ENCODE measurements at regions of chr5 and their contacts with region 1.

Region 1: DNA sequence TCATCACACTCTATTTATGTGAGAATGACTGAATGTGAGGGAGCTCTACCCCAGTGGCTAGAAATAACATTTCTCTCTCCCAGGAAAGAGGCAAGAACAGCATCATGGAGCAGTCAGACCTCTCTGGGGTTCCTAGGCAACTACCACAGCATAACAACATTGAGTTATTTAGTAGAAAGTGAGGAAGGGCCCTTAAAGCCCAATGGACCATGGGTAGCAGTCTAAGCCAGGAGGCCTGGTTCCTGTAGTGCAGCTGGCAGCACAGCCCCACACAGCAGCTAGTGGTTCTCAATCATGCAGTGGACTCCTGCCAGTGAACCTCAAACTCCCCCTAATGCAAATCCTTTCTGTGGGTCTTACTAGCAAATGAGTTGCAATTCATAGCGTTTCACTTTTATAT is 55.3 kb downstream of the SPEF2 start:
- DNase-seq: peak in 32 of 35 experiments; percentile 1 to 51 (median 18)
- ATAC-seq: peak; percentile 26 to 84 (median 42)
- H3K4me3 ChIP-seq: peak overlapping the region in 1 of 2 donors; percentile 38
- H3K4me3 Mint-ChIP-seq: peak overlapping the region in 1 of 3 donors; percentile 69
- H3K27ac ChIP-seq: peak overlapping the region; percentile 67
- H3K27ac Mint-ChIP-seq: peak overlapping the region; percentile 90 to 92
- H3K4me1 ChIP-seq: peaks cover 8 to 59% of the 10 kb centered on the region in 2 experiments
- H3K4me1 Mint-ChIP-seq: peaks cover 57 to 76% (median 60%) of the 10 kb centered on the region in 3 donors
- H3K27me3 ChIP-seq: no peaks in the 10 kb centered on the region
- H3K27me3 Mint-ChIP-seq: no peaks in the 10 kb centered on the region

Region 2: DNA sequence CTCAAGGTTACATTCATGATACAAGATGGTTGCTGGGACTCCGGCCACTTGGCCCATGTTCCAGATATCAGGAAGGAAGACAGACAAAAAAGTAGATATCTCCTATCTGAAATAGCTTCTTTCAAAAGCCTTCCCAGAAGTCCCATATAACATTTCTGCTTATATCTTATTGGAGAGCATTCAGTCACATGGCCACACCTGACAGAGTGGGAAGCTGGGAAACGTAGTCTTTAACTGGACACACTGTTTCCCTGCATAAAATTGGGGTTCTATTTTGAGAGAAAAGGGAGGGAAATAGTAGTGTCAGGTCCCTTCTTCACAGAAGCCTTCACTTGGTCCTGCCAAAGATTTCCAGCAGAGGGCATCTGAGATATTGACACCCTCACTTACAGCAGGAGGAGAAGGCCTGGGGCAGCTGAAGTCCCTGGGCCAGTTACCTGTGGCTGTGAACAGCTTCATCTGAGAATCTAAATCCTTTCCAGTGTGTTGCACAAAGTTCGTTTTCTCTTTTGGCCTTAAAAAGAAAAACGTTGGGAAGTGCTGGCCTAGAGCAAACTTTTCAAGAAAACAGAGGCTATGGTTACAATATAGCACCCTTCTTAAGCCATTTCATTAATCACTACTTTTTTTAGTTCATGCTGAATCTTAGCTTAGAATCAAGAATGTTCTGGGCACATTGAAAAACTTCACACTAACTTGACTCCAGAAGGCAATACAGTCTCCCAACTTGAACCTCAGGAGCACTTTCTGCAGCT is 21.8 kb before region 1 on chr5:
- CTCF ChIA-PET with region 1: interaction called, 3 to 10 read pairs
- POLR2A ChIA-PET with region 1: interaction called in 1 of 2 experiments, 4 read pairs
- DNase-seq: peak; percentile 15 to 79 (median 58)
- ATAC-seq: peak; percentile 86 to 96 (median 94)
- H3K4me3 ChIP-seq: no peak overlapping the region
- H3K4me3 Mint-ChIP-seq: no peak overlapping the region
- H3K27ac ChIP-seq: no peak overlapping the region
- H3K27ac Mint-ChIP-seq: peak overlapping the region; percentile 45 to 66
- H3K4me1 ChIP-seq: peaks cover 0 to 4% of the 10 kb centered on the region in 2 experiments
- H3K4me1 Mint-ChIP-seq: peaks cover 6 to 9% (median 8%) of the 10 kb centered on the region in 3 donors
- H3K27me3 ChIP-seq: no peaks in the 10 kb centered on the region
- H3K27me3 Mint-ChIP-seq: no peaks in the 10 kb centered on the region

Region 3: GRCh38 chr5:35863159-35863558 is 190.2 kb after region 1 on chr5:
- CTCF ChIA-PET with region 1: no interaction called
- POLR2A ChIA-PET with region 1: interaction called, 5 to 10 read pairs
- DNase-seq: peak in 1 of 35 experiments; percentile 10
- ATAC-seq: peak in 1 of 4 experiments; percentile 20
- H3K4me3 ChIP-seq: peak overlapping the region; percentile 83 to 94
- H3K4me3 Mint-ChIP-seq: peak overlapping the region; percentile 92 to 97 (median 92)
- H3K27ac ChIP-seq: peak overlapping the region; percentile 99
- H3K27ac Mint-ChIP-seq: peak overlapping the region; percentile 90 to 98
- H3K4me1 ChIP-seq: peaks cover 20 to 55% of the 10 kb centered on the region in 2 experiments
- H3K4me1 Mint-ChIP-seq: peaks cover 64 to 85% (median 76%) of the 10 kb centered on the region in 3 donors
- H3K27me3 ChIP-seq: no peaks in the 10 kb centered on the region
- H3K27me3 Mint-ChIP-seq: no peaks in the 10 kb centered on the region